Prostate gland (tissue), 2 donors: ENCODE measurements at regions of chr16 and their contacts with region 1.

Region 1: DNA sequence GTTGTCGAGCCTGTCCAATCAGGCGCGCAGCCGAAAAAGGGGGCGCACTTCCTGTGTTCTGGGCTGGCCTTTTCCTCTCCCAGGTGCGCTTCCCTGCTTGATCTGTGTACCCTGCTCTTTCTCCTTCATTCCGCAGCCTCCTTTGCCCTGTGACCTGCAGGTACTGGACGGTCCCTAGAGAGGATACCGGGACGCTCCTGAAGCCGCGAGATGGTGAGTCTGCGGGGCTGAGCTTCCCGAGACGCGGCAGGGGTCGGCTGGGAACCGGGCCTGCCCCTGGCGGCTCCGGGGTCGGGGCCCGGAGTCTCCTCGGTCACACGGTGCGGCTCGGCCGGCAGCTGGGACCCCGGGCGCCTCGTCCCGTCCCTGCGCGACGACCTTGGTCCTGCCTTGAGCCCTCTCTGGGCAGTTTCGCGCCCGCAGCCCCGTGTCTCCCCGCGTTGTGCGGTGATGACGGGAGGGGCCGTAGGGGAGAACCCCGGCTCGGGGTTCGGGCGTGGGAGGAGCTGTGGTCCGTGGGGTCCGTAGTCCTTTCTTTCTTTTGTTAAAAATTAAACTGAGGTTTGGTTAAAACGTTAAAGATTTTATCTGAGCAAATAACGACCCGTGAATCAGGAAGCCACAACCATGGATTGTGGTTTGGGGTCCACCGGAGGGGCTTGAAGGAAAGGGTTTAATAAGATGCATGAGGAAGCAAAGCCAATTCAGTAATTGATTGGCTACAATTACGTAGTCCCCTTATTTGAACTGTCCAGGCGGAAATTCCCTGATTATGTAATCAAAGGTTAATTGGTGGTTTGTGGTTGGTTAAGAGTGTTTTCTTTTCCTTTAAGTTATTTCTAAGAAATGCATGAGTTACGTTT is 172.8 kb upstream of the ZNF267 start:
- DNase-seq: peak; percentile 90
- H3K4me3 ChIP-seq: peak overlapping the region; percentile 73 to 89
- H3K27ac ChIP-seq: peak overlapping the region; percentile 53 to 56
- H3K4me1 ChIP-seq: no peaks in the 10 kb centered on the region
- H3K27me3 ChIP-seq: no peaks in the 10 kb centered on the region
- CTCF ChIP-seq: no peak
- POLR2A ChIP-seq: no peak

Region 2: GRCh38 chr16:31073968-31074813 is 626.6 kb before region 1 on chr16 and contains the starts of genes ZNF646 and ZNF668:
- intact Hi-C with region 1: no loop called
- DNase-seq: peak; percentile 99
- H3K4me3 ChIP-seq: peak within 1 kb of the TSS; percentile 97 to 99
- H3K27ac ChIP-seq: peak within 1 kb of the TSS; percentile 91 to 94
- H3K4me1 ChIP-seq: peaks cover 10% of the 10 kb centered on the region
- H3K27me3 ChIP-seq: no peaks in the 10 kb centered on the region
- CTCF ChIP-seq: peak in 1 of 4 experiments; percentile 10
- POLR2A ChIP-seq: peak; percentile 55
- total RNA-seq, gene ZNF646: 26.3 to 33.7 TPM
- total RNA-seq, gene ZNF668: 15.6 to 21.4 TPM

Region 3: DNA sequence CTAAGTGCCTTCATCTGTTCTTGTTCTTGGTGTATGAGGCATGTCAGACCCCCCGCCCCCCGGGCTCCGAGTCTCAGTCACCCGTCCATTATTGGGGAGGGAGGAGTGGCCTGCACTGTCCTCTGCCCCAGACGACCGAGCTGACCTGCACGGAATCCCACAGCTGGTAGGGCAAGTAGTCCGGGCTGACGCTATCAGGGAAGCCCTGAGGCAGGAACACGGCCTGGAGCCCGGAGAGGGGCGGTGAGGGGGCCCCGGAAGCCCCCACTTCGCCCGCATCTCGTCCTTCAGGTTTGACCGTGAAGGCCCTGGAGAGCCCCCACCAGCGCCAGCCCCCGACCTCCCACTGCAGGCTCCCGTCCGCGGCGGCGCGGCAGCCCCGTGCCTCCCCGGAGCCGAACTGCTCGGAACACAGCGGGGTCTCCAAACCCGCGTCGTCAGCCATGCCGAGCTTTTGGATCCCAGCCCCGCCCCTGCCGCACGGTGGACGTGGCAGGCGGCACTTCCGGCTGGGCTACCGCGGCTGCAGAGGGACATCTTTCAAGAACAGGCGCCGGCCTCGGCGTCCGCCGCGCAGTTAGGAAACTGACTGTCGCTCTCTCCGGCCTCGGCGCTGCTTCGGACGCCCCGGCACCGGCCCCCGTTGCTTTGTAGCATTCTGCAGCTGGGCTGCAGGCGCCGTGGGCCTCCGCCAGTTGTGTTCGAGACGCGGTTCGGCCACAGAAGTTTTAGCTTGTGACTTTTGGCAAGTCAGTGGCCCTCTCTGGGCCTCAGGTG is 192.6 kb before region 1 on chr16 and contains the start of gene RUSF1:
- intact Hi-C with region 1: loop called (anchors 5 kb)
- DNase-seq: peak; percentile 91
- H3K4me3 ChIP-seq: peak within 1 kb of the TSS; percentile 89 to 92
- H3K27ac ChIP-seq: peak within 1 kb of the TSS; percentile 82 to 88
- H3K4me1 ChIP-seq: peaks cover 8% of the 10 kb centered on the region
- H3K27me3 ChIP-seq: no peaks in the 10 kb centered on the region
- CTCF ChIP-seq: peak in 2 of 4 experiments; percentile 6 to 28
- POLR2A ChIP-seq: peak; percentile 85
- total RNA-seq, gene RUSF1: 142 to 153 TPM